ENCODE measurements at regions of chr3 and their contacts with region 1.

Region 1: GRCh38 chr3:8416965-8417364 is 84.7 kb upstream of the LMCD1 start:
- DNase-seq: peak in 1 of 2 experiments; percentile 19
- H3K4me3 ChIP-seq: no peak overlapping the region; the same call in 1 of the 2 replicates
- H3K27ac ChIP-seq: no peak overlapping the region
- H3K4me1 ChIP-seq: no peaks in the 10 kb centered on the region
- H3K27me3 ChIP-seq: no peaks in the 10 kb centered on the region
- CTCF ChIP-seq: no peak

Region 2: GRCh38 chr3:7813365-7813764 is 603.6 kb before region 1 on chr3:
- CTCF ChIA-PET with region 1: no interaction called
- POLR2A ChIA-PET with region 1: no interaction called
- intact Hi-C with region 1: no loop called
- DNase-seq: no peak
- H3K4me3 ChIP-seq: no peak overlapping the region
- H3K27ac ChIP-seq: no peak overlapping the region
- H3K4me1 ChIP-seq: no peaks in the 10 kb centered on the region
- H3K27me3 ChIP-seq: no peaks in the 10 kb centered on the region
- CTCF ChIP-seq: no peak

Region 3: GRCh38 chr3:8239718-8240695 is 177.0 kb before region 1 on chr3:
- CTCF ChIA-PET with region 1: interaction called, 7 read pairs
- POLR2A ChIA-PET with region 1: no interaction called
- intact Hi-C with region 1: loop called (anchors 10 kb)
- DNase-seq: peak in 1 of 2 experiments; percentile 18
- H3K4me3 ChIP-seq: no peak overlapping the region
- H3K27ac ChIP-seq: no peak overlapping the region
- H3K4me1 ChIP-seq: no peaks in the 10 kb centered on the region
- H3K27me3 ChIP-seq: no peaks in the 10 kb centered on the region
- CTCF ChIP-seq: peak; percentile 85

Region 4: GRCh38 chr3:8324740-8325139 is 92.2 kb before region 1 on chr3:
- CTCF ChIA-PET with region 1: interaction called, 7 read pairs
- POLR2A ChIA-PET with region 1: no interaction called
- intact Hi-C with region 1: loop called (anchors 5 kb)
- DNase-seq: peak in 1 of 2 experiments; percentile 19
- H3K4me3 ChIP-seq: no peak overlapping the region
- H3K27ac ChIP-seq: no peak overlapping the region
- H3K4me1 ChIP-seq: 0 out of 2 replicates have a peak, but pooled peaks cover 5% of the 10 kb centered on the region
- H3K27me3 ChIP-seq: no peaks in the 10 kb centered on the region
- CTCF ChIP-seq: peak; percentile 58

Region 5: GRCh38 chr3:8607234-8608040 is 190.5 kb after region 1 on chr3:
- CTCF ChIA-PET with region 1: no interaction called
- POLR2A ChIA-PET with region 1: no interaction called
- intact Hi-C with region 1: loop called (anchors 1 kb)
- DNase-seq: peak; percentile 38 to 46
- H3K4me3 ChIP-seq: no peak overlapping the region
- H3K27ac ChIP-seq: no peak overlapping the region
- H3K4me1 ChIP-seq: no peaks in the 10 kb centered on the region
- H3K27me3 ChIP-seq: no peaks in the 10 kb centered on the region
- CTCF ChIP-seq: peak; percentile 77

Measured in PC-9 (cell line).